ENCODE measurements at regions of chr20 and their contacts with region 1.

Region 1: GRCh38 chr20:1313236-1313964 is 15.5 kb downstream of the SDCBP2 start:
- DNase-seq: peak; percentile 61 to 83
- H3K4me3 ChIP-seq: peak overlapping the region in 1 of 2 donors; percentile 12
- H3K27ac ChIP-seq: no peak overlapping the region
- H3K4me1 ChIP-seq: peaks cover 0 to 11% (median 7%) of the 10 kb centered on the region in 4 donors
- H3K27me3 ChIP-seq: no peaks in the 10 kb centered on the region
- CTCF ChIP-seq: peak; percentile 93 to 95

Region 2: DNA sequence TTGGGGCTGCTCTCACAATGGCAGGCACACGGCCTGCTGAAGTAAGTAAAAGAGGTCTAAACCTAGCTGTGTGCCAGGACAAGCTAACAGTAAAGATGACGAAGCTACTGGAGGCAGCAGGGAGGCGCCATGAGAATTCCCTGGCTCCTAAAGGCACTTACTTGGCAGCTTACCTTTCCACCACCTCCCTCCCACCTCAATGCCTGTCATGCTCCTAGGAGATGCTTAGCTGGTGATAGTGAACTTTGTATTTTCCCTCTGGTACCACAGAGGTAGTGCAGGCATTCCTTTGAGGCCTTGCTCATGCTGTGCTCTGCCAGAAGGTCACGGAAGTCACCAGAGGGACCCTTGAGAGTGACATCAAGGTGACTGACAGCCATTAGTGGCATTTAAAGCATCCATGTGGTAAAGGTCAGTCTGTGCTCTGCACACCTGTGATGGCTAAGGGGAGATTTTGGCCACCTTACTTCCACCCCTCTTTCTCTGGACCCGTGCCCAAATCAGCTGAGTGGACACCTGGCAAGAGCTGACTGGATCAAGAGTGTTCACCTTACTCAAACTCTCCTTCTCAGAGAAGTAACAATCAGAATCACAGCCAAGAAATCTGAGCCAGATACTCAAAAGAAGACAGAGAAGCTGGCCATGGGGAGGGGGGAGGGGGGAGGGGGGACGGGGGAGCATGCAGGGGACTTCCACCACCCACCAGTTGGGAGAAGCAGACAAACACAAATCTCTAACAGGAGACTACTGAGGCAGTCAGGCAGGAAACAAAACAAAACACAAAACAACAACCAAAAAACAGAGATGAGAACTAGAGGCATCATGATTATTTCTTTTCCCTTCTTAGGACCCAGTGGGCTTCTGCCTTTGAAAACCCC is 76.5 kb after region 1 on chr20:
- intact Hi-C with region 1: no loop called
- DNase-seq: no peak
- H3K4me3 ChIP-seq: peak overlapping the region in 1 of 2 donors; percentile 70
- H3K27ac ChIP-seq: peak overlapping the region; percentile 14 to 20
- H3K4me1 ChIP-seq: peaks cover 0 to 52% (median 40%) of the 10 kb centered on the region in 4 donors
- H3K27me3 ChIP-seq: no peaks in the 10 kb centered on the region
- CTCF ChIP-seq: no peak

Region 3: GRCh38 chr20:1437235-1437904 is 124.0 kb after region 1 on chr20:
- intact Hi-C with region 1: loop called (anchors 1 kb)
- DNase-seq: peak; percentile 65 to 73
- H3K4me3 ChIP-seq: no peak overlapping the region
- H3K27ac ChIP-seq: no peak overlapping the region
- H3K4me1 ChIP-seq: no peaks in the 10 kb centered on the region
- H3K27me3 ChIP-seq: no peaks in the 10 kb centered on the region
- CTCF ChIP-seq: peak; percentile 68 to 74

Measured in tibial artery (tissue), 4 donors.